HEK293 (cell line): ENCODE measurements at regions of chr1 and their contacts with region 1.

Region 1: DNA sequence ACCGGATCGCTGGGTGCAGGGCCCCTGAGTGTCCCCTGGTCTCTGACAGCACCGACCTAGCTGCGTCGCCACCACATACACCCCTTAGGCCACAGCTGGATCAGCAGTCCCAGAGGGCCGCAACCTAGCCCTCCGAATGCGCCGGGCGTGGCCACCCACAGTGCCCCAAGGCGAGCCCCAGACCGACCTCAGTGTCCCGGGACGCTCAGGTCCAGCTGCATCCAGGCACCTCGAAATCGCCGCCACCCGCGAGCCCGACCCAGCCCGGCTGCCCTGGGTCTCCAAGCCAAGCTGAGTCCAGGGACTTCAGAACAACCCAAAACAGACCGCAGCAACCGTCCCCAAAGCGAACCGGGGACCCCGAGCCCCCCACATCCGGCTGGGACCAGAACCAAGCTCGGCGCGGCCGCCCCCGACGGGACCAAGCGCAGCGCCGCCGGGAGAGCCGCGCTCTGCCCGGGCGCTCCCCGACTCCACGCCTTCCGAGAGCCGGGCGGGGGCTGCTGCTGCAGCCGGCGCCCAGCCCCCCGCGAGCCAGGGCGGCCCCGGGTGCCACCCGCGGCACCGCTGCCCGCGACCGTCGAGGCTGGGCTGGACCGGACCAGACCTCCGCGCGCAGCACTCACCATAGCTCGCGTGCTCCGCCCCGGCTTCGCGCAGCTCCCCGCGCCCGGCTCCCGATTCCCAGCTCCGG is 54.6 kb upstream of the ECE1 start:
- H3K4me3 ChIP-seq: peak overlapping the region; percentile 66
- H3K27ac ChIP-seq: peak overlapping the region; percentile 74; the same call in 1 of the 2 replicates
- H3K4me1 ChIP-seq: peaks cover 9% of the 10 kb centered on the region
- CTCF ChIP-seq: no peak

Region 2: DNA sequence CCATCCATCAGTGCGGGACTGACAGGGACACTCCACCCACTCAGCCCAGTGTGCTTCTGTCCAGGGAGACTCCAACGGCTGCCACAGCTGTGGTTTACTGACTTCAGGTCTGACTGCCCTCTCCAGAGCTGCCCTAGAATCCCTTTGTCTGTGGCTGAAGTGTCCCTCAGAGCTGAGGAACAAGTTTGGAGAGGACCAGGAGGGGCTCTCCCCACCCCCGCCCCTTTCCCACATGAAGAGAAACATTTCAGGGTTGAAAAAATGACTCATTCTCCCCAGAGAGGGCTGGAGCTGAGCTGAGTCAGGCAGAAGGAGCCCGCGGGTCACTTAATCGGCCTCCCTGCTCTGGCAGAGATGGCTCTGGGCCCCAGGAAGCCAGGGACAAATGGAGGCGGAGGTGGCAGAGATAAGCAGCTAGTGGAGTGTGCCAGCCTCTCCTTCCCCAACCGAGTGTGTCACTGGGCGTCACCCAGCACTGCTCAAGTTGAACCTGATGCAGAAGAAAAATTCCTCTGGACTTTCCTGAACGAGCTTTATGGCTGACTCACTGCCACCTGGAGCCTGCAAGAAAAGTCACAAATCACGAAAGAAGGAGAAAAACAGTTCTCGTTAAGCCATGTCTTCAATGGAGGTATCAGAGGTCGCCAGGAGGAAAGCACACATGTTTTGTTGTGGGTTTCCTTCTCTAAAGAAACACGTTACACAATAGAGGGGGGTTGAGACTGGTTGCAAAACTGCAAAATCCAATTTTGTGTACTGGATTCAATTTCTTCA is 20.3 kb before region 1 on chr1:
- CTCF ChIA-PET with region 1: interaction called, 79 read pairs
- POLR2A ChIA-PET with region 1: interaction called, 16 read pairs
- H3K4me3 ChIP-seq: no peak overlapping the region
- H3K27ac ChIP-seq: peak overlapping the region; percentile 40
- H3K4me1 ChIP-seq: peaks cover 25% of the 10 kb centered on the region
- CTCF ChIP-seq: no peak